Mammary epithelial cell (primary cell): ENCODE measurements at regions of chr21 and their contacts with region 1.

Region 1: DNA sequence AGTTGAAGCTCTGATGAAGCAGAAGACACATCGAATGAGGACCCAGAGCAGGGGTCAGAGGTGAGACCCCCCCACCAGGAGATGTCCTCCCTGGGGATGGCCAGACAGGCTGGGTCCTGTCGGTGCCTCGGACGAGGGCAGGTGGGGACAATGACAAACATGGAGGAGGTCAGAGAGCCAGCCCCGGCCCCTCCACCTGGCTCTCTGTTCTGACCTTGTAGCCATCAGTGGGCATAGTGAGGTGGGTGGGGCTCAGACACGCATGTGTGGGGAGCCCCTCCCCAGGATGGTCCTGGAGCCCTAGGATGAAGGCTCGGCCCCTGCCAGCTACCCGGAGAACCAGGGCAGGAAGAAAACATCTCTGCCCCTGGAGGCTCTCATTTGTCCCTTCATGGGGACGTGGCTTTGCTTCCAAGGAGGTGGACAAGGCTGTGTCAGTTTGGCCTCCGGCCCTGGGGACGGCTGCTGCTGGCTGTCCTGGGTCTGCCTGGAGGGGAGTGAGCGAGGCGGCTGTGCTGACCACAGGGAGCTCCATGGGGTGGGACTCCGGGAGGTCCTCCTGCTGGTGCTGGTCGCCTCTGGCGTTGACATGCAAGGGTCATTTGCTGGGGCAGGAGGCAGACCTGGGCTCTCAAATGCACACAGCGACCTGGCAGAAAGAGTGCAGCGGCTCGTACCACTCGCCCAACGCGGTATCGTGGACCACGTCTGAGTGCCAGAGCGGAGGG is 2.6 kb downstream of the KRTAP10-6 start:
- DNase-seq: no peak
- H3K4me3 ChIP-seq: no peak overlapping the region
- H3K27ac ChIP-seq: no peak overlapping the region
- H3K4me1 ChIP-seq: peaks cover 9% of the 10 kb centered on the region
- H3K27me3 ChIP-seq: no peaks in the 10 kb centered on the region
- CTCF ChIP-seq: no peak

Region 2: GRCh38 chr21:44637018-44637850 is 47.5 kb after region 1 on chr21 and contains the start of gene KRTAP10-10:
- CTCF ChIA-PET with region 1: no interaction called
- dilution Hi-C with region 1: no loop called
- in situ Hi-C with region 1: no loop called
- intact Hi-C with region 1: loop called (anchors 2 kb)
- DNase-seq: no peak
- H3K4me3 ChIP-seq: no peak within 1 kb of the TSS
- H3K27ac ChIP-seq: no peak within 1 kb of the TSS
- H3K4me1 ChIP-seq: no peaks in the 10 kb centered on the region
- H3K27me3 ChIP-seq: no peaks in the 10 kb centered on the region
- CTCF ChIP-seq: no peak
- total RNA-seq, gene KRTAP10-10: not detected